Astrocyte of the cerebellum (primary cell): ENCODE measurements at regions of chr3 and their contacts with region 1.

Region 1: GRCh38 chr3:42652611-42653302 is 740 bp upstream of the ZBTB47 start:
- DNase-seq: no peak
- H3K4me3 ChIP-seq: peak overlapping the region; percentile 79
- CTCF ChIP-seq: no peak

Region 2: DNA sequence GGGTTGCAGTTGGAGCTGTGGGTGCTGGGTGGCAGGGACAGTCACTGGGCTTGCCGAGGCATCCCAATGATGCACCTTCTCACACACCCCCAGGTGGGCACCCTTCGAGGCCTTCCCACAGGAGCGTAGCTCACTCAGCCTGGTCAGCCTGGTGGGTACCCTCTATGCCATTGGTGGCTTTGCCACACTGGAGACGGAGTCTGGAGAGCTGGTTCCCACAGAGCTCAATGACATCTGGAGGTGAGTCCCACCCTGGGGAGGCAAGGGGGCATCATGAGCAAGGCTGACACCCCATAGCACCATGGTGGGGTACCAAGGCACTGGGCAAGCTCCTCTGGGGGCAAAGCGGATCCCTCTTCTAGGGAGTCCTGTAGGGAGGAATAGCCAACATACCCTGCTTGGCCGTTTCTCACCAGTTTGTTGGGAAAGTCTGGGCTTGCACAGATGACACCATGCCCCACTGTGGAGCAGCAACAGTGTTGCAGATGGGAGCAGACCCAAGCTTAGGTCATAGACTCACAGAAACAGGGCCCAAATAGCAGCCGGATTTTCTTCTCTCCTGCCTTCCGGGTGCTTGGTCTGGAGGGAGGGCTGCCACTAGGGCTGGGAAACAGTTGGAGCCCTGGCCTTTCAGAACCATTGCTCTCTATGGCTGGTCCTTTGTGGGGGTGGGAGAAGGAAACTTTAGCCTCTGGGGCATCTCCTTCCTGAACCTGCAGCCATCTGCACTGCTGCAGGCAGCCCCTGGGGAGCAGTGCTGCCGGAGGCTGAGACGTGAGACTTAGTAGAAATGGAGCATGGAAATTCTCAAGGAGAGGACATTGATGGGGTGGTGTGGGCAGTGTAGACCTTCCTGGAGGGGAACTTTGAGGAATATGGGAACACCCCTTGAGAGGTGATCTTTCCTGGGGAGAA is 38.3 kb after region 1 on chr3:
- in situ Hi-C with region 1: loop called (anchors 5 kb)
- DNase-seq: no peak
- H3K4me3 ChIP-seq: no peak overlapping the region
- CTCF ChIP-seq: no peak